ENCODE measurements at regions of chr20 and their contacts with region 1.

Region 1: DNA sequence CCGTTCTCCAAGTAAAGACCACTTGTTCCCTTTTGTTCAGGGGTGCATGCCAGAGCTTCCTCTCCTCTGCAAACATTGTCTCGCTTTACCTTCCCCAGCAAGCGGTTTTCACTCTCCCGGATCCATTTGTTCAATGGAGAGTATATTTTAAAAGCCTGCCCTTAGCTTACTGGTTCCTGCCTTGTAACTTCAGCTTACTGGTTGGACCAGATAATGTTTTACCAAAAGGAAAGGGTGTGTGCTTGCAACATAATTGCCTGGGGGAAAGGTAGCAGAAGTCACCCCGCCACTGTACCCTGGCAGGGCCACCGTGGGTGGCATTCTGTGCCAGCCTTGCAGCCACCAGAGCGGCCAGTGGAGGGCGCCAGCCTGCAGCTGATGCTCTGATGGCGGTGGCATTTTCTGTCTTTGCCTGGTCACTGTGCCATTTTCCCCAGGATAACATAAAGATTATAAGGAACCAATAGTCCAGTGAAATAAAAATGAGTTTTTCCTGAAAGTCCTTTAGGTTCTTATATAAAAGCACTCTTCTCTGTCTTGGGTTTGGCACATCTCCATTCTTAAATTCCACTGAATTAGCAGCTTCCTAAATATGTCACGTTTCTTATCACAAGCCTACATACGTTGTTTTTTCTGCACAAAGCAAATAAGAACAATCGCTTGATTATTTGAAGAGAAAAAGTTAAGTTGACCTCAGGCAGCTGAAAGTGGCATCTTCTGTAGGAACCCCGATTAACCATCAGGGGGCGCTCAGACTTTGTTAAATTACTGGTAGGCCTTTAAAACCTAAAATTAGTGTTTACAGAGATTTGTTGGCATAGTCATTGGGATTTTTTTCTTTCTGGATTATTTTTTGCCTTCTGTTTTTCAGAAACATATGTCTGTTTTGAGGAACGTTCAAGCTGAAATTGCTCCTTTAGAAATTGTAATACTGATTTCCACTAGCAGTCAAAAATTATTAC is 67.4 kb upstream of the XRN2 start:
- DNase-seq: peak; percentile 40
- H3K4me3 Mint-ChIP-seq: no peak overlapping the region
- H3K27ac Mint-ChIP-seq: no peak overlapping the region
- H3K4me1 Mint-ChIP-seq: peaks cover 3% of the 10 kb centered on the region
- H3K27me3 Mint-ChIP-seq: no peaks in the 10 kb centered on the region

Region 2: DNA sequence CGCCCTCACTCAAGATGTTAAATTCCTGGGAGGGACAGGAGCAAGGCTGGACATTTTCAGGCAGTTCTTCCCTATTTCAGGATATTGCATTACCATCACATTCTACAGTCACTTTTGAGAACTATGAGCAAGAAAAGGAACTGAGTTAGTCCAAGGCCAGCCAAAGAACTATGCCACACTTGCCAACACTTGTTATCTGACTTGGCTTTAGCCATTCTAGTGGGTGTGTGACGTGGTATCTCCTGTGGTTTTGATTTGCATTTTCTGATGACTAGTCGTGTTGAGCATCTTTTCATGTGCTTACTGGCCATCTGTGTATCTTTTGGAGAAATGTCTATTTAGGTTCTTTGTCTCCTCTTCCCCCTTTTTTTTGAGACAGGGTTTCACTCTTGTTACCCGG is 79.4 kb after region 1 on chr20:
- intact Hi-C with region 1: no loop called
- DNase-seq: no peak
- H3K4me3 Mint-ChIP-seq: no peak overlapping the region
- H3K27ac Mint-ChIP-seq: peak overlapping the region; percentile 16
- H3K4me1 Mint-ChIP-seq: peaks cover 41% of the 10 kb centered on the region
- H3K27me3 Mint-ChIP-seq: no peaks in the 10 kb centered on the region

Region 3: DNA sequence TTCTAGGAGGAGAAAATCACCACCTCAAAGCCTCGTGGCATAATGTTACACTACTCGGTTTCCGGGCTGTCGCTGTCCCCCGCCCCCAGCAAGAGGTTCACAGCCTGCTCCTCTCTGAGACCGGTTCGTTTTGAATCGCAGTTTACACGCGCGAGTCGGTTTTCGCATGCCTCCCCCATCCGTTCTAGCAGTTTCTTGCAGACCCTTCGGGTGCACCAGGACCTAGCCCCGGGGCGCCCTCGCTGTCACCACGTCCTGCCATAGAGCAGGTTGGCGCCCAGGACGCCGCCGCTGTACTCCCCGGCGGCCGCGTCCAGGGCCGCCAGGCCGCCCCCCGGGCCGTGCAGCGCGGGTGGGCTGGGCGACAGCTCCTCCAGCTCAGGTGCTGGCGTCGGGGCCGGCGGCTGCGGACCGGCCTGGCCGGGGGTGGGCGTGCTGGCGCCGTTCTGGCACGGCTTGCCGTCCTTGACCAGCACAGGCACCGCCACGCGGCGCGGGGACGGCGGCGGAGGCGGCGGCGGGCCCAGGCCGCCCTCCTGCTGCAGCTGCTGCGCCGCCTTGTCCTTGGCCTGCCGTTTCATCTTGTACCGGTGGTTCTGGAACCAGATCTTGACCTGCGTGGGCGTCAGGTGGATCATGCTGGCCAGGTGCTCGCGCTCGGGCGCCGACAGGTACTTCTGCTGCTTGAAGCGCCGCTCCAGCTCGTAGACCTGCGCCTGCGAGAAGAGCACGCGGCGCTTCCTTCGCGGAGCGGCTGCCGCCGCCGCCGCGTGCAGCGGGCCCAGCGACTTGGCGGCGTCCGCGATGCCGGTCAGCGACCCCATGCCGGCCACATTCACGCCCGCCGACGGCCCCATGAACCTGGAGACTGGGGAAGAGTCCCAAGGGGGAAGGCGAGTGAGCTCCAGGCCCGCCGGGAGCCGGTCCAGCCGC is 160.2 kb after region 1 on chr20:
- intact Hi-C with region 1: loop called (anchors 2 kb)
- DNase-seq: peak; percentile 24
- H3K4me3 Mint-ChIP-seq: peak overlapping the region; percentile 56
- H3K27ac Mint-ChIP-seq: peak overlapping the region; percentile 46
- H3K4me1 Mint-ChIP-seq: peaks cover 20% of the 10 kb centered on the region
- H3K27me3 Mint-ChIP-seq: peaks cover 74% of the 10 kb centered on the region

Measured in activated T-helper 2 cell treated with anti-CD3 and anti-CD28 coated beads, Interferon-gamma antibody, Interleukin-2, Interleukin-4, amounts not matched to agents 10 μg/mL and 5 μg/mL and 100 μg/mL, durations not matched to agents 14 hours and 24 hours and 36 hours (primary cell).